Activated CD4-positive, alpha-beta T cell treated with anti-CD3 and anti-CD28 coated beads, Interleukin-2, amount 10 ng/mL, durations not matched to agents 24 days and 14 days (primary cell): ENCODE measurements at regions of chr5 and their contacts with region 1.

Region 1: GRCh38 chr5:108345541-108346171 is 36.2 kb downstream of the FBXL17 start:
- DNase-seq: no peak
- H3K4me3 Mint-ChIP-seq: no peak overlapping the region
- H3K27ac Mint-ChIP-seq: no peak overlapping the region
- H3K4me1 Mint-ChIP-seq: no peaks in the 10 kb centered on the region
- H3K27me3 Mint-ChIP-seq: no peaks in the 10 kb centered on the region

Region 2: DNA sequence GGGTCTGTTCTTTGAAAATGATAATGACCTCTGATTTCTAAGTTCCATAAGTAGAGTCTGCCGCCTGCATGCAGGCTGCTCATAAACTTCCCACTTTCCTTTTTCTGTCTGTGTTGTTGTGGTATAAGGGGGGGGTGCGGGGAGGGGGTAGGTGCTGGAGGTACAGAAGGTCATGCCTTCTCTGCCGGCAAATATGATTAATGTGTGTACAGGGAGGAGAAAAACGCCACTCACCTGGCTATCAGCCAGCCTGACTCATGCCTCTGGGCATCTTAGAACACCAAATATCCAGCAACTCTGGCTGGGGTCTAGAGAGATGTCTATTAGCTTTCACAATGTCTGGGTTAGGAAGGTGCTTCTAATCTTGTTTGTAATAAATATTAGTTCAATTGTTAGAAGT is 803.2 kb before region 1 on chr5:
- intact Hi-C with region 1: no loop called
- DNase-seq: no peak
- H3K4me3 Mint-ChIP-seq: no peak overlapping the region
- H3K27ac Mint-ChIP-seq: no peak overlapping the region
- H3K4me1 Mint-ChIP-seq: peaks cover 5% of the 10 kb centered on the region
- H3K27me3 Mint-ChIP-seq: peaks cover 11% of the 10 kb centered on the region

Region 3: GRCh38 chr5:107673368-107674136 is 672.1 kb before region 1 on chr5:
- intact Hi-C with region 1: loop called (anchors 10 kb)
- DNase-seq: peak; percentile 91
- H3K4me3 Mint-ChIP-seq: peak overlapping the region; percentile 77
- H3K27ac Mint-ChIP-seq: no peak overlapping the region
- H3K4me1 Mint-ChIP-seq: peaks cover 25% of the 10 kb centered on the region
- H3K27me3 Mint-ChIP-seq: peaks cover 62% of the 10 kb centered on the region

Region 4: DNA sequence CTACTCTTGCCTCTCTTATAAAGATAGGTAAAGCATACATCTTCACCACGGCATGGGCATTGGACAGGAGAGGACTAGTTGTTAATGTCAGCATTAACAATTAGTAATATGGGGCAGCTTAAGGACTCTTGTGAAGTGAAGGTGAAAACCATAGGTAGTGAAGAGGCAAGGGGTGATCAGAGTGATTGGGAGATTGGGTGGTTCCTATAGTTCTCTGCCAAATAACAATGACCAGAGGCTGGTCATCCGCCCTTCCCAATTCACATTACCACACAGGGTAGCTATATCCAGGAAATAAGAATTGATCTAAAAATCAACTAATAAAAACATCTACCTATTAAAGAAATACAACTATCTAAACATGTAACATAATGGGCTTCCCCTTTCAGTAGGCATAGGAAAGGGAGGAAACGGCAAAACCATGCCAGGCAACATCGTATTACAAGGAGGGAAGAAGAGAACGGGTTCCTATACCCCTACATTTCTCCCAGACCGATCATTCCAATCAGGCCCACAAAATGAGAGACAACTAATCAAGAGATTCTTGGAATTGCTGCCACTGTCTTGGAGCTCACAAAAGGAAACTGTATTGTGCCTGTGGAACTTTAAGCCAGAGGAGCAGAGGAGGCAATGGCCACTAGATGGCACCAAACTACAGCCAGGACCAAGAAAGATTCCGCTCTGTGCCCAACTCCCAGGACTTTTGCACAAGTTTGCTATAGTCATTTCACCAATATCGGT is 85.4 kb before region 1 on chr5:
- intact Hi-C with region 1: loop called (anchors 1 kb)
- DNase-seq: peak; percentile 86
- H3K4me3 Mint-ChIP-seq: no peak overlapping the region
- H3K27ac Mint-ChIP-seq: no peak overlapping the region
- H3K4me1 Mint-ChIP-seq: peaks cover 3% of the 10 kb centered on the region
- H3K27me3 Mint-ChIP-seq: no peaks in the 10 kb centered on the region